ENCODE measurements at regions of chr4 and their contacts with region 1.

Region 1: GRCh38 chr4:107183155-107183774 is 147.2 kb upstream of the DKK2 start:
- DNase-seq: peak in 1 of 2 donors; percentile 4
- ATAC-seq: peak; percentile 90

Region 2: GRCh38 chr4:107037199-107037584 is 146.1 kb before region 1 on chr4:
- intact Hi-C with region 1: loop called in 1 of 2 experiments (anchors 10 kb)
- DNase-seq: peak in 1 of 2 donors; percentile 27
- ATAC-seq: no peak

Measured in left colon (tissue), 2 donors.